Naive thymus-derived CD4-positive, alpha-beta T cell (primary cell): ENCODE measurements at regions of chr13 and their contacts with region 1.

Region 1: GRCh38 chr13:74133657-74134201 is 475 bp downstream of the KLF12 start:
- DNase-seq: peak; percentile 69 to 97 (median 93)
- ATAC-seq: peak; percentile 72
- H3K4me3 ChIP-seq: peak overlapping the region; percentile 86
- H3K4me3 Mint-ChIP-seq: peak overlapping the region in 8 of 10 donors; percentile 92 to 100 (median 97)
- H3K27ac ChIP-seq: peak overlapping the region; percentile 98
- H3K27ac Mint-ChIP-seq: peak overlapping the region; percentile 97 to 100 (median 99)
- H3K4me1 ChIP-seq: peaks cover 24 to 39% of the 10 kb centered on the region in 2 donors
- H3K4me1 Mint-ChIP-seq: peaks cover 14 to 38% (median 37%) of the 10 kb centered on the region in 7 donors
- H3K27me3 ChIP-seq: no peaks in the 10 kb centered on the region
- H3K27me3 Mint-ChIP-seq: peaks cover 0 to 5% (median 0%) of the 10 kb centered on the region in 5 donors

Region 2: GRCh38 chr13:72781451-72782439 is 1352.0 kb before region 1 on chr13 and contains the starts of genes DIS3 and PIBF1:
- CTCF ChIA-PET with region 1: no interaction called
- POLR2A ChIA-PET with region 1: no interaction called
- intact Hi-C with region 1: loop called (anchors 1 to 5 kb)
- DNase-seq: peak; percentile 82 to 97 (median 94)
- ATAC-seq: peak; percentile 99
- H3K4me3 ChIP-seq: peak within 1 kb of the TSS; percentile 94
- H3K4me3 Mint-ChIP-seq: peak within 1 kb of the TSS; percentile 96 to 100 (median 99)
- H3K27ac ChIP-seq: peak within 1 kb of the TSS; percentile 87
- H3K27ac Mint-ChIP-seq: peak within 1 kb of the TSS; percentile 95 to 100 (median 98)
- H3K4me1 ChIP-seq: peaks cover 35 to 37% of the 10 kb centered on the region in 2 donors
- H3K4me1 Mint-ChIP-seq: peaks cover 44 to 84% (median 71%) of the 10 kb centered on the region in 7 donors
- H3K27me3 ChIP-seq: no peaks in the 10 kb centered on the region
- H3K27me3 Mint-ChIP-seq: no peaks in the 10 kb centered on the region
- total RNA-seq, gene DIS3: 24.8 to 44.8 (median 39.2) TPM
- total RNA-seq, gene PIBF1: 27.3 to 40.1 (median 31.6) TPM

Region 3: DNA sequence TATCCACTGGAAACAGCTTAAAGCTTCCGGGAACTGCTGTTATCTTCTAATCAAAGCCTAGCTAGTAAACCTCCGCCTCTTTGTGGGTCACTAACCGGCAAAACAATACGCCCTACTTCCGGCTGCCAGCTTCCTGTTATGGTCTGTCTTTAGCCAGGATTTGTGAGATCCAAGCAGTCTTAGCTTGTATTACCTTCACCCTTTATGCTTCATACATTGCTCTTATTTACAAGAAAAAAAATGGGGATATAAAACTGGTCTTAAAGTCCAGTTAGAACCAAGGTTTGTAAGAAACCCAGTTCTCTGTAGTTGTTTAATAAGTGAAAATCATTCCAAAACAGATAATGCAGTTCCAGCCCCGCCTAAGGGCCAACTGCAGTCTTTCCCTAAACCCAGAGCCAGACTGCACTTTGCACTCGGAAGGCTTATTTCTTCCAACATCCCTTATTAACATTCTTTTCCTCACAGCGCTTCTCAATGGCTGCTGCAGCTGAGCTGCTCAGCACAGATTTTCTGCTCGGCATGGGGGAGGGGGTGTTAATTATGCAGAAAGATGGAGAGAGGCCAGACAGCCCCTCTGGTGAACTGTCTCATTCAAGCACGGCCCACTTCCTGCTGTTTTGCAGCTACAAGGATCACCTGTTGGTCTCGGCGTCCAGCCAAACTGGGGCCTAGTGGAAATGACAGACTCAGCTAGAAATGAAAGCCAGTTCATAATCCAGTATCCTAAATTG is 367.9 kb before region 1 on chr13:
- CTCF ChIA-PET with region 1: no interaction called
- POLR2A ChIA-PET with region 1: interaction called, 35 read pairs
- intact Hi-C with region 1: loop called (anchors 1 kb)
- DNase-seq: peak; percentile 29 to 91 (median 85)
- ATAC-seq: peak; percentile 92
- H3K4me3 ChIP-seq: peak overlapping the region; percentile 52
- H3K4me3 Mint-ChIP-seq: peak overlapping the region; percentile 77 to 87 (median 85)
- H3K27ac ChIP-seq: peak overlapping the region; percentile 77
- H3K27ac Mint-ChIP-seq: peak overlapping the region; percentile 90 to 100 (median 98)
- H3K4me1 ChIP-seq: peaks cover 37 to 52% of the 10 kb centered on the region in 2 donors
- H3K4me1 Mint-ChIP-seq: peaks cover 37 to 92% (median 89%) of the 10 kb centered on the region in 7 donors
- H3K27me3 ChIP-seq: no peaks in the 10 kb centered on the region
- H3K27me3 Mint-ChIP-seq: no peaks in the 10 kb centered on the region

Region 4: GRCh38 chr13:74026753-74027152 is 107.0 kb before region 1 on chr13:
- CTCF ChIA-PET with region 1: interaction called, 4 read pairs
- POLR2A ChIA-PET with region 1: interaction called, 6 read pairs
- intact Hi-C with region 1: loop called (anchors 1 to 2 kb)
- DNase-seq: peak; percentile 22 to 77 (median 68)
- ATAC-seq: peak; percentile 94
- H3K4me3 ChIP-seq: peak overlapping the region; percentile 21
- H3K4me3 Mint-ChIP-seq: peak overlapping the region; percentile 77 to 92 (median 84)
- H3K27ac ChIP-seq: peak overlapping the region; percentile 77
- H3K27ac Mint-ChIP-seq: peak overlapping the region; percentile 80 to 97 (median 94)
- H3K4me1 ChIP-seq: peaks cover 51 to 59% of the 10 kb centered on the region in 2 donors
- H3K4me1 Mint-ChIP-seq: peaks cover 36 to 97% (median 94%) of the 10 kb centered on the region in 7 donors
- H3K27me3 ChIP-seq: no peaks in the 10 kb centered on the region
- H3K27me3 Mint-ChIP-seq: no peaks in the 10 kb centered on the region

Region 5: GRCh38 chr13:74090869-74091605 is 42.7 kb before region 1 on chr13:
- CTCF ChIA-PET with region 1: no interaction called
- POLR2A ChIA-PET with region 1: interaction called, 4 read pairs
- intact Hi-C with region 1: loop called in 1 of 2 experiments (anchors 2 kb)
- DNase-seq: no peak
- ATAC-seq: no peak
- H3K4me3 ChIP-seq: no peak overlapping the region
- H3K4me3 Mint-ChIP-seq: peak overlapping the region; percentile 1 to 75 (median 44)
- H3K27ac ChIP-seq: no peak overlapping the region
- H3K27ac Mint-ChIP-seq: peak overlapping the region in 6 of 9 donors; percentile 3 to 90 (median 68)
- H3K4me1 ChIP-seq: peaks cover 36 to 43% of the 10 kb centered on the region in 2 donors
- H3K4me1 Mint-ChIP-seq: peaks cover 36 to 88% (median 77%) of the 10 kb centered on the region in 7 donors
- H3K27me3 ChIP-seq: no peaks in the 10 kb centered on the region
- H3K27me3 Mint-ChIP-seq: no peaks in the 10 kb centered on the region

Region 6: DNA sequence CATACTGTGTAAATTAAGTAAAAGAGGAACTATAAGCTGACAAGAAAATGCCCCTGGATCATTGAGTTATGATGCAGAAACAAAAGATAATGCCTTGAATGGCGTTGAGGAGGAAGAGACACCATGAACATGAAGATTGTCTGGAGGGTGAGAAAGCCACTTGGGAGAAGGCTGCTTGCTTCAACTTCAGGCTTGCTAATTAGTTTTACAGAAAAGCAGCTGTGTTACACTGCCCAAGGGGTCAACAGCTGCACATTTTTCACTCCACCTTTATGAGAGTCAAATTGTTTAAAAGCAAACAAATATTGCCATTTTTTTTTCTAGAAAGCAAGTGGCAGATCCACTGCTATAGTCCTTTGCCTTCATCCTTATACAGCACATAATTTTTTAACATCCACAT is 35.9 kb after region 1 on chr13:
- CTCF ChIA-PET with region 1: no interaction called
- POLR2A ChIA-PET with region 1: no interaction called
- intact Hi-C with region 1: no loop called
- DNase-seq: no peak
- ATAC-seq: no peak
- H3K4me3 ChIP-seq: no peak overlapping the region
- H3K4me3 Mint-ChIP-seq: no peak overlapping the region
- H3K27ac ChIP-seq: no peak overlapping the region
- H3K27ac Mint-ChIP-seq: no peak overlapping the region
- H3K4me1 ChIP-seq: peaks cover 0 to 3% of the 10 kb centered on the region in 2 donors
- H3K4me1 Mint-ChIP-seq: peaks cover 0 to 6% (median 2%) of the 10 kb centered on the region in 7 donors
- H3K27me3 ChIP-seq: no peaks in the 10 kb centered on the region
- H3K27me3 Mint-ChIP-seq: peaks cover 0 to 14% (median 0%) of the 10 kb centered on the region in 5 donors

Region 7: DNA sequence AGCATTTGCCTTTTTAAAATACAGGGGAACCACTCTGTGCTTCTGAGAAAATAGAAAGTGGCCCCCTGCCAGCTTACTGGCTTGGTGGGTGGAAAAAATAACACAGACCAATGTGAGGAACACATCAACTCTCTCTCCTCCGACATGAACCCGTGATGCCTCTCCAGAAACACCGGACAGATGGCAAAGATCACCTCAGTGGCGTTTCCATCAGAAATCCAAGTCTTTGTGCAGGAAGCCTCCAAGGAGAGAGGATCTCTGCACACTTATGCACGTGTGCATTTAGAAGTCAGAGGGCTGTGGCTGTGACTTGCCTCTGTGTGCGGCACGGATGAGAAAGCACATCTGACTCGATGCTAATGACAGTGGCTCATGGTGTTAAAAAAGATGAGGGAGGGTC is 112.8 kb after region 1 on chr13:
- CTCF ChIA-PET with region 1: no interaction called
- POLR2A ChIA-PET with region 1: interaction called, 29 read pairs
- intact Hi-C with region 1: loop called in 1 of 2 experiments (anchors 1 kb)
- DNase-seq: peak in 1 of 9 donors; percentile 42
- ATAC-seq: no peak
- H3K4me3 ChIP-seq: peak overlapping the region; percentile 17
- H3K4me3 Mint-ChIP-seq: peak overlapping the region in 9 of 10 donors; percentile 26 to 90 (median 74)
- H3K27ac ChIP-seq: peak overlapping the region; percentile 63
- H3K27ac Mint-ChIP-seq: peak overlapping the region in 8 of 9 donors; percentile 85 to 98 (median 97)
- H3K4me1 ChIP-seq: peaks cover 78 to 88% of the 10 kb centered on the region in 2 donors
- H3K4me1 Mint-ChIP-seq: peaks cover 59 to 98% (median 96%) of the 10 kb centered on the region in 7 donors
- H3K27me3 ChIP-seq: no peaks in the 10 kb centered on the region
- H3K27me3 Mint-ChIP-seq: peaks cover 0 to 9% (median 0%) of the 10 kb centered on the region in 5 donors

Region 8: GRCh38 chr13:75326173-75327134 is 1192.7 kb after region 1 on chr13:
- CTCF ChIA-PET with region 1: no interaction called
- POLR2A ChIA-PET with region 1: no interaction called
- intact Hi-C with region 1: loop called (anchors 2 to 5 kb)
- DNase-seq: peak; percentile 19 to 88 (median 82)
- ATAC-seq: peak; percentile 94
- H3K4me3 ChIP-seq: peak overlapping the region; percentile 71
- H3K4me3 Mint-ChIP-seq: peak overlapping the region; percentile 90 to 97 (median 94)
- H3K27ac ChIP-seq: peak overlapping the region; percentile 87
- H3K27ac Mint-ChIP-seq: peak overlapping the region; percentile 92 to 99 (median 98)
- H3K4me1 ChIP-seq: peaks cover 4 to 24% of the 10 kb centered on the region in 2 donors
- H3K4me1 Mint-ChIP-seq: peaks cover 22 to 63% (median 55%) of the 10 kb centered on the region in 7 donors
- H3K27me3 ChIP-seq: no peaks in the 10 kb centered on the region
- H3K27me3 Mint-ChIP-seq: no peaks in the 10 kb centered on the region